Transverse colon (tissue), 4 donors: ENCODE measurements at regions of chr1 and their contacts with region 1.

Region 1: DNA sequence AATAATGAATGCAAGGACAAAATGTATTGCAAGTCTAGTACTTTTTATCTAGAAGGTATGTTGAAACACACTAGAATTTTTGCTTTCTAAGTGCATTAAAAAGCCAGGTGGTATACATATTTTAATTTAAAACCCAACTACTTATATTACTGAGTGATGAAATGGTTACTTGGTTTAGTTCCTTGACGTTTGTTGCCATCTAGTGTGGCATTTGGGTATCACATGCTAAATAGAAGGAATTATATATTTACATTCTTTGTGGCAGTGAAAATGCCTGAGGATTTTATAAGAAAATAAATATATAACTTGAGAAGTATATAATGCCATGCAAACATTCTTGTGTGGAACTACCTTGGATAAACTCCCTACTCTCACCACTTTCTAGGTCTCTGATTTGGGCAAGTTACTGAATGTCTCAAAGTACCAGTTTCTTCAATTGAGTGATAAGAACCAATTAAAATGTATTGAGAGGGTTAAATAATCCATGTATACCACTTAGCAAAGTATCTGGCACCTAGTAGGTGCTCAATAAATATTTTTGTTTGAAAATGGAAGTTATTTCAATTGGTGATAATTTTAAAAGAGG is 69.6 kb downstream of the SDCCAG8 start:
- DNase-seq: no peak
- H3K4me3 ChIP-seq: no peak overlapping the region
- H3K27ac ChIP-seq: no peak overlapping the region
- H3K4me1 ChIP-seq: no peaks in the 10 kb centered on the region
- H3K27me3 ChIP-seq: no peaks in the 10 kb centered on the region
- CTCF ChIP-seq: peak; percentile 61 to 79 (median 72)
- EP300 ChIP-seq: no peak
- POLR2A ChIP-seq: no peak

Region 2: GRCh38 chr1:242467556-242468145 is 857.7 kb before region 1 on chr1:
- in situ Hi-C with region 1: loop called (anchors 10 to 25 kb)
- intact Hi-C with region 1: loop called (anchors 10 kb)
- DNase-seq: peak; percentile 41
- H3K4me3 ChIP-seq: no peak overlapping the region
- H3K27ac ChIP-seq: no peak overlapping the region
- H3K4me1 ChIP-seq: no peaks in the 10 kb centered on the region
- H3K27me3 ChIP-seq: no peaks in the 10 kb centered on the region
- CTCF ChIP-seq: peak; percentile 41 to 57 (median 48)
- EP300 ChIP-seq: no peak
- POLR2A ChIP-seq: no peak

Region 3: GRCh38 chr1:243409284-243409683 is 83.9 kb after region 1 on chr1:
- in situ Hi-C with region 1: no loop called
- intact Hi-C with region 1: no loop called
- DNase-seq: no peak
- H3K4me3 ChIP-seq: no peak overlapping the region
- H3K27ac ChIP-seq: no peak overlapping the region
- H3K4me1 ChIP-seq: no peaks in the 10 kb centered on the region
- H3K27me3 ChIP-seq: no peaks in the 10 kb centered on the region
- CTCF ChIP-seq: no peak
- EP300 ChIP-seq: no peak
- POLR2A ChIP-seq: no peak

Region 4: DNA sequence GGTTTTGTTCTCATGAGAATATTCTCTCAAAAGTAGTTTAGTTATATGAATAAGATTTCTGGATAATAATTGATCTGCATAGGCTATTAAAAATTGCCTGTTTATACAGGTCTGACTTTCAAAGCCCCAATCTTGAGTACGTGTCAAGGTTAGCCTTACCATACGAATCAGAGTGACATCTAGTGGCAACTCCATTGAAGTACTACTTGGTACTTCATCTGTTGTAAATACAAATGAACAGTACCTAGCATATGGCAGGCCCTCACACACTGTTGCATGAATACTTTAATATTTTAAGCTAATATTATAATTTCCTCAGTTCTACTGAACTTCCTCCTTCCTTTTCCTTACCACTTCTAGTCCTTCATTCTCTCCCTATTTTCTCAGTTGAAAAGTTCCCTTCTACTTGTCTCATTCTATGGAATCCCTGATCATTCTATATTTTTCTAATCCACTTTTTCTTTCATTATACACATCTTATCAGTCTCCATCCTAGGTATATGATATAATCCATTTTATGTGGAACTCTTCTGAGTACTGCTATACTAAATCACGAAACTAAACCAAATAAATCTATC is 423.4 kb after region 1 on chr1:
- in situ Hi-C with region 1: loop called in 2 of 4 experiments (anchors 25 kb)
- intact Hi-C with region 1: no loop called
- DNase-seq: no peak
- H3K4me3 ChIP-seq: no peak overlapping the region
- H3K27ac ChIP-seq: no peak overlapping the region
- H3K4me1 ChIP-seq: peaks cover 0 to 6% (median 0%) of the 10 kb centered on the region in 4 donors
- H3K27me3 ChIP-seq: no peaks in the 10 kb centered on the region
- CTCF ChIP-seq: peak; percentile 62 to 82 (median 68)
- EP300 ChIP-seq: no peak
- POLR2A ChIP-seq: no peak

Region 5: DNA sequence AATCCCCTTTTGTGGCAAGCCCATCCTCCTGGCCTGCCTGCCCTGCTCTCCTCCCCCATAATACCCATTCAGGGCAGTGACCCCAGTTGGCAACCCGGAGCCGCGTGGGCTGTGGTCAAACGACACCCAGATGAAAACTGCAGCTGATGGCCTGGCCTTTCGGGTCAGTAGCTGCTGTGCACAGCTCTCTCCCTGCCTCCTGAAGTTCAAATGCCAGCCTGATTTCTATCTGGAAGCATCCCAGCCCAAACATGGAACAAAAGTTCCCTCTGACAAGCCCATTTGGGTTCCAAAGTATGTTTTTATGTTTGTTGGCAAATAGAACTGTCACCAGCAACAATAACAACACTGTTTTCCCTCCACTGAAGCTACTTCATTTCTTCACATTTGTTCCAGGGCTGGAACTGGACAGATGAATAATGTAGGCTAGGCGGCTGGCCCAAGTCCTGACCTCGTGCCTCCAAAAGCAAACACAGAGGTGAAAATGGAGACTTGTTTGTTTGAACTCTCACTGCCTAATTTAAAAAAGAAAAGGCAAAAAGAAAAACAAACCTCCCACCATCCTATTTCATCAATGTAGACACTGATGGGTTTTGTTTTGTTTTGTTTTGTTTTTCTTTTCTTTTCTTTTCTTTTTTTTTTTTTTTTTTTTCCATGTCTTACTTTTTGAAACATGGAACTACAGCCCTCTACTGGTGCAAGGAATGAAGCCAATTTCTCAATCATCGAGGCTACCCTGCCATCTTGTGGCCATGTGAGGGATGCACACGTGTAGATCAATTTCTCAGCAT is 947.3 kb after region 1 on chr1:
- in situ Hi-C with region 1: loop called in 2 of 4 experiments (anchors 25 kb)
- intact Hi-C with region 1: no loop called
- DNase-seq: peak; percentile 71
- H3K4me3 ChIP-seq: no peak overlapping the region
- H3K27ac ChIP-seq: peak overlapping the region; percentile 56 to 77 (median 66)
- H3K4me1 ChIP-seq: peaks cover 0 to 9% (median 3%) of the 10 kb centered on the region in 4 donors
- H3K27me3 ChIP-seq: no peaks in the 10 kb centered on the region
- CTCF ChIP-seq: peak; percentile 86 to 98 (median 93)
- EP300 ChIP-seq: no peak
- POLR2A ChIP-seq: no peak

Region 6: DNA sequence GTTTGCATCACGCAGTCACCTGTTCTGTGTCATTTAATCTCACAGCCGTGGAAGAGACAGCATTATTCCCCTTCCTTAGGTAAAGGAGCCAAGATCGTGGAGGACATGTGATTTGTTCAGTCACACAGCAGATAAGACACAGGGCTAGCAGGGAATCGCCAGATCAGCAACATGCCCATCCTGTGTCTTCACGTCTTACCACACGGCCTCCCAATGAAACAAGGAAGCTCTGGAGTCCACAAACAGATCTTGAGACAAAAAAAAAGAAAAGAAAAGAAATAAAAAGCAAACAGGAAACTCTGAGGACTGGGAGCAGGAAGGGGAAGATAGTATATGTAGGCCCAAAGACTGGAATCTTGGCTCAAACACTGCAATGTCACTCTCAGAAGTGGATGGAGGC is 971.0 kb after region 1 on chr1:
- in situ Hi-C with region 1: loop called in 1 of 4 experiments (anchors 25 kb)
- intact Hi-C with region 1: no loop called
- DNase-seq: no peak
- H3K4me3 ChIP-seq: no peak overlapping the region
- H3K27ac ChIP-seq: no peak overlapping the region
- H3K4me1 ChIP-seq: peaks cover 0 to 11% (median 2%) of the 10 kb centered on the region in 4 donors
- H3K27me3 ChIP-seq: no peaks in the 10 kb centered on the region
- CTCF ChIP-seq: no peak
- EP300 ChIP-seq: no peak
- POLR2A ChIP-seq: no peak